Common myeloid progenitor, CD34-positive (primary cell): ENCODE measurements at regions of chr16 and their contacts with region 1.

Region 1: GRCh38 chr16:3099732-3100499 is 822 bp upstream of the ZSCAN10 start:
- DNase-seq: peak; percentile 90 to 93 (median 92)
- H3K4me3 ChIP-seq: peak overlapping the region in 6 of 7 experiments; percentile 9 to 59 (median 41)
- H3K27ac ChIP-seq: no peak overlapping the region
- H3K4me1 ChIP-seq: peaks cover 10 to 41% (median 35%) of the 10 kb centered on the region in 4 experiments
- H3K27me3 ChIP-seq: no peaks in the 10 kb centered on the region

Region 2: GRCh38 chr16:3118204-3118806 is 18.4 kb after region 1 on chr16:
- CTCF ChIA-PET with region 1: interaction called, 28 read pairs
- POLR2A ChIA-PET with region 1: interaction called, 3 read pairs
- DNase-seq: no peak
- H3K4me3 ChIP-seq: no peak overlapping the region
- H3K27ac ChIP-seq: no peak overlapping the region
- H3K4me1 ChIP-seq: peaks cover 0 to 5% (median 3%) of the 10 kb centered on the region in 4 experiments
- H3K27me3 ChIP-seq: peaks cover 0 to 2% (median 0%) of the 10 kb centered on the region in 5 experiments

Region 3: GRCh38 chr16:3123986-3124886 is 24.3 kb after region 1 on chr16:
- CTCF ChIA-PET with region 1: interaction called, 103 read pairs
- POLR2A ChIA-PET with region 1: no interaction called
- DNase-seq: peak; percentile 94 to 97 (median 96)
- H3K4me3 ChIP-seq: peak overlapping the region; percentile 34 to 93 (median 88)
- H3K27ac ChIP-seq: peak overlapping the region; percentile 50 to 66
- H3K4me1 ChIP-seq: peaks cover 0 to 26% (median 24%) of the 10 kb centered on the region in 4 experiments
- H3K27me3 ChIP-seq: peaks cover 0 to 2% (median 0%) of the 10 kb centered on the region in 5 experiments